GM12878 (cell line): ENCODE measurements at regions of chr11 and their contacts with region 1.

Region 1: GRCh38 chr11:506238-506994 is 626 bp downstream of the RNH1 start:
- DNase-seq: peak; percentile 83
- ATAC-seq: peak; percentile 76
- H3K4me3 ChIP-seq: peak overlapping the region; percentile 89
- H3K27ac ChIP-seq: peak overlapping the region; percentile 100
- H3K4me1 ChIP-seq: peaks cover 18% of the 10 kb centered on the region
- H3K27me3 ChIP-seq: no peaks in the 10 kb centered on the region
- CTCF ChIP-seq: no peak
- EP300 ChIP-seq: no peak
- POLR2A ChIP-seq: peak; percentile 80
- RAD21 ChIP-seq: no peak

Region 2: DNA sequence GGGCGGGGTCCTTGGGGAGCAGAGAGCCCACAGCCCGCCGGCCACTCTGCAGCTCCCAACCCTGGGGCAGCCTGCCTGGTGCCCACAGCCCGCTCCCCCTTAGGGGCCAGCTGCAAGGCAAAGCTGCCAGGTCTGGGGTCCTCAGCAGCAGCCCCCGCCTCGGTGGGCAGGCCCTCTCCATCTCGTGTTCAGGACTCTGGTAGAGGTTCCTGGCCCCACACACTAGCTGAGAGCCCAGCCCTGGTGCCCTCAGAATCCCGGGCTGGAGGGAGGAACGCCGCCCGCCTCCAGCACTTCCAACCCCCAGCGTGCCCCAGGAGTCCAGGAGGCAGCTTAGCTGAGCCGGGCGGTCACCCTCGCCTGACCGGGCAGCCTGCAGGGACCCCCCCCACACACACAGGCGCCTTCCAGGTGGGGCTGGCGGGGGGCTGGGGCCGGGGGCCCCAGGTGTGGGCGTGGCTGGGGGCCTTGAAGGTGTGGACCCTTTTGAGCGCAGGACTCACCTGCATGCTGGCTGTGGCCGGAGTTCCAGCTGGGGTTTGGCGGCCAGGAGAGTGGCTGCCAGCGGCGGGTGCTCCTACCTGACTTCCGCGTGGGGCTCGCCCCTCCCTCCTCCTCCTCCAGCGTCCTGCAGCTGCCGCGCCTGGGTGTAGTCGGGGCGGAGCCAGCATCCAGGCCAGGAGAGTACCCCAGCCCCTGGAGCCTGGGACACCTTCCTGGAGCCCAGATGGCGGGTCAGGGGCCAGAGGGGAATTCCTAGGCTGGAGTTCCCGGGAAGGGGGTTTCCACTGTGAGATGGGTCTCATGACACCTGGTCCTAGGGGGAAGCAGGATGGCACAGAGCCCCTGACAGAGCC is 64.8 kb before region 1 on chr11 and contains the start of gene ANO9:
- CTCF ChIA-PET with region 1: no interaction called
- POLR2A ChIA-PET with region 1: interaction called, 12 read pairs
- RAD21 ChIA-PET with region 1: interaction called, 4 read pairs
- SMC1A ChIA-PET with region 1: no interaction called
- in situ Hi-C with region 1: no loop called
- intact Hi-C with region 1: no loop called
- DNase-seq: no peak
- ATAC-seq: peak; percentile 93
- H3K4me3 ChIP-seq: peak within 1 kb of the TSS; percentile 78
- H3K27ac ChIP-seq: no peak within 1 kb of the TSS; the same call in 1 of the 2 replicates
- H3K4me1 ChIP-seq: peaks cover 12% of the 10 kb centered on the region
- H3K27me3 ChIP-seq: no peaks in the 10 kb centered on the region
- CTCF ChIP-seq: no peak
- EP300 ChIP-seq: no peak
- POLR2A ChIP-seq: peak; percentile 78
- RAD21 ChIP-seq: no peak
- polyA plus RNA-seq, gene ANO9: 0.21 to 1.6 TPM

Region 3: DNA sequence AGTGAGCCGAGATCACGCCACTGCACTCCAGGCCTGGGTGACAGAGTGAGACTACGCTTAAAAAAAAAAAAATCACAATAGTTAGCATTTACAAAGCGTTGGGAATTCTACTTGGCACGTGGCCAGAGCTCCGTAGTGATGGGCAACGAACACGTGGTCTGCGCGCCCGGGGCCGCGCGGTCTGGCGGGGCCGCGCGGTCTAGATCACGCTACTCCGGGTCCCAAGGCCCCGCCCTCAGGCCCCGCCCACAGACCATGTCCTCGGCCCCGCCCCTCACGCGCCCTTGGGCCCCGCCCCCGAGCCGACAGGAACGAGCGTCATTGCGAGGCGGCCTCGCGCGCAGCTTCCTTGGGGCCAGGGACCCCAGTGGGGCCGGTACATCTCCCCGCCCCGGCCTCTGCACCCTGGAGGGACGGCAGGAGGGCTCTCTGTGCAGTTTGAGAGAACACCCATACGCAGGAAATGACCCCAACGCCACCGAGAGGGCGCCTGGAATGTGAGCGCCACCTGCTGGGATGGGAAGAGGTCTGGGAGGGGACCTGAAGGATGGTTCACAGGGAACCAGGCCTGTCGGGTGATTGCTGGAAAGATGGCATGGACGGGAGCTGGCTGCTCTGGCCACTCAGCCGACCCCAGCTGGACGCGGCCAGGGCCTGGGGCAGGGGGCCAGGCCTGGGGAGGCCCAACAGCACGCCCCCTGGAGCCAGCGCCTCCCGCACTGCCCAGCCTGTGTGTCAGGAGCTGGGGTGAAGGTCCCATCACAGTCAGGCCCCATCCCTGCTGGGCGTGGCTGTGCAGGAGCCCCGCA is 58.3 kb before region 1 on chr11:
- CTCF ChIA-PET with region 1: interaction called, 12 read pairs
- POLR2A ChIA-PET with region 1: interaction called, 14 read pairs
- RAD21 ChIA-PET with region 1: interaction called, 4 read pairs
- SMC1A ChIA-PET with region 1: interaction called, 12 read pairs
- in situ Hi-C with region 1: loop called (anchors 5 kb)
- intact Hi-C with region 1: loop called (anchors 1 kb)
- DNase-seq: peak; percentile 54
- ATAC-seq: peak; percentile 79
- H3K4me3 ChIP-seq: peak overlapping the region; percentile 82
- H3K27ac ChIP-seq: peak overlapping the region; percentile 84
- H3K4me1 ChIP-seq: peaks cover 15% of the 10 kb centered on the region
- H3K27me3 ChIP-seq: no peaks in the 10 kb centered on the region
- CTCF ChIP-seq: peak; percentile 83 to 87 (median 87)
- EP300 ChIP-seq: no peak
- POLR2A ChIP-seq: peak; percentile 89
- RAD21 ChIP-seq: peak; percentile 79

Region 4: GRCh38 chr11:518463-519250 is 12.2 kb after region 1 on chr11:
- CTCF ChIA-PET with region 1: interaction called, 20 read pairs
- POLR2A ChIA-PET with region 1: interaction called, 3 read pairs
- RAD21 ChIA-PET with region 1: no interaction called
- SMC1A ChIA-PET with region 1: no interaction called
- in situ Hi-C with region 1: no loop called
- intact Hi-C with region 1: no loop called
- DNase-seq: no peak
- ATAC-seq: peak; percentile 99
- H3K4me3 ChIP-seq: no peak overlapping the region; the same call in 1 of the 2 replicates
- H3K27ac ChIP-seq: no peak overlapping the region
- H3K4me1 ChIP-seq: peaks cover 3% of the 10 kb centered on the region; the same call in 1 of the 2 replicates
- H3K27me3 ChIP-seq: no peaks in the 10 kb centered on the region
- CTCF ChIP-seq: peak; percentile 84 to 99 (median 97); a peak in 4 of 6 replicates
- EP300 ChIP-seq: no peak
- POLR2A ChIP-seq: peak; percentile 70; the same call in 1 of the 2 replicates
- RAD21 ChIP-seq: peak; percentile 72

Region 5: DNA sequence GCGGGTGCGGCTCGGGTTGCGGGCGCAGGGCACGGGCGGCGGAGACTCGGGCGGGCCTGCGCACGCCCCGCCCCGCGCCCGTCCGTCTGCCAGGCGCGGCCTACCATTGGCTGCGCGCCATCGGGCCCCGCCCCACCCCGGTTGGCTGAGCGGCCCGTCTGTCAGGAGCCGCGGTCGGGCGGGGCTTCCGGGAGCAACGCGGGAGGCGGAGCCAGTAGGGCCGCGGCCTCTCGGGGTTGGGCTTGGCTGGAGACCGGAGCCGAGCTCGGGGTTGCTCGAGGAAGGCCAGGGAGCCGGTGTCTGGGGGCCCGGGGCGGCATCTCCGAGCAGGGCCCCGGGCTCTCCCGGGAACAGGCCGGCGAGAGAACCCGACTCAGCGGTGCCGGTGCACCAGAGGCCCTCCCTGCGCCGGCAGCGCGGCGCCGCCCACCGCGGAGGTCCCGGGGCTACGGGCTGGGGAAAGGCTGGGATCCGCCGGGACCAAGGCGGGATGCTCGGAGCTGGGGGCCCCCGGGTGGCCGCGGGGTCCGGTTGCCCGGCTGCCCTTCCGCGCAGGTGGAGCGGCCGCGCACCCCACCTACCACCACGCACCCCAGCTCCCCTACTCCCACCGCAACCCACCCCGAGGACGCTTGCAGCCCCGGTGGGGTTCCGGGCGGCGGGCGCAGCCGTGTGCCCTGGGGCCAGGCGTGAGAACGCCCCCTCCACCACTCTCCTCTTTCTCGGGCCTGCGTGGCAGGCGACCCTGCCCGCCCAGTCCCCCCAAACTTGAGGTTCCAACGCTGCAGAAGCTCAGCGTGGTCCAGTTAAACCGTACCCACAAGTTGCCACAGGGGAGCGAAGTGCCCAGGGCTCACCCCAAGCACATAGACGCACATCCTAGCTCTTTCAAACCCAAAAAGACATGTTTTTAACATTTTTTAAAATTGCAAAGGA is 29.4 kb after region 1 on chr11 and contains the start of gene HRAS:
- CTCF ChIA-PET with region 1: no interaction called
- POLR2A ChIA-PET with region 1: interaction called, 8 read pairs
- RAD21 ChIA-PET with region 1: interaction called, 3 read pairs
- SMC1A ChIA-PET with region 1: no interaction called
- in situ Hi-C with region 1: no loop called
- intact Hi-C with region 1: loop called (anchors 2 kb)
- DNase-seq: peak; percentile 59
- ATAC-seq: peak; percentile 88
- H3K4me3 ChIP-seq: peak within 1 kb of the TSS; percentile 90
- H3K27ac ChIP-seq: peak within 1 kb of the TSS; percentile 79
- H3K4me1 ChIP-seq: peaks cover 28% of the 10 kb centered on the region
- H3K27me3 ChIP-seq: no peaks in the 10 kb centered on the region
- CTCF ChIP-seq: no peak
- EP300 ChIP-seq: no peak
- POLR2A ChIP-seq: peak; percentile 81
- RAD21 ChIP-seq: no peak
- polyA plus RNA-seq, gene HRAS: 2.8 to 12.7 TPM